Posterior cingulate gyrus (tissue), 11 donors: ENCODE measurements at regions of chr20 and their contacts with region 1.

Region 1: DNA sequence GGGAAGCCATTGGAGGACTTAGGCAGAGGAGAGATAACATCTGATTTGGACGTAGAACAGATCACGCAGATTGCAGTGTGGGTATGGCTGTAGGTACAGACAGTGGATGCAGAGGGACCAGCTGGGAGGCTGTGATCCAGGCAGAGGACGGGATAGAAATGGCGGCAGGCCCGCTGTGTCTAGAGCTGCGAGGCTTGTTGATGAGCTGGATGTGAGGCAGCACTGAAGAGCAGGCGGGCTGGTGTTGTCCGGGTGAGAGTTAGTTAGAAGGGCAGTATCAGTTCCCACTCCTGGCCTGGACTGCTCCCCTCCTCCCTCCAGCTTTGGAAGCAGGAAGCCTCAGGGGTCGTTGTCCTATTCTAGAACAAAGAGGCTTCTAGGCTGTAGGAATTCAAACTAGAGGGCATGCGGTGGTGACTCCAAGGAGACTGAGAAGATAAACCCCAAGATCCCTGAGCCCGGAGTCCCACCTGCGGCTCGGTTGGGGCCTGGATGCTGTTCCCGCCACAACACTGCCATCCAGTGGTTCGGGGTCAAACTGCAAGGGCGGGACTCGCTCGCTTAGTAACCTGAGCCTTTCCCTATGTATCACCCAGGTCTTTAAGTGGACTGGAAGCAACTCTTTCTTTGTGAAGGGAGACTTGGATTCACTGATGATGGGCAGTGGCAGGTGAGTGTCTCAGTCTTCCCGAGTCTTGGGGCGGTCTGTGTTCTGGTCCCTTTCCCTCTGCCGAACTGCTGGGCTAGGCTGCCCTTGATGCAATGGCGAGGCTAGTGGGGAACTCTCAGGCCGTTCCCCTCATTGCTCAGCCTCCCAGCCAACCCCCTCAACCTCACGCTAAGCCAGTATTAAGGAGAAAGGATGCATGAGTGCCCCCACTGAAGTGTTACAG is 11.2 kb downstream of the TLDC2 start:
- DNase-seq: peak; percentile 72 to 97 (median 88)

Region 2: DNA sequence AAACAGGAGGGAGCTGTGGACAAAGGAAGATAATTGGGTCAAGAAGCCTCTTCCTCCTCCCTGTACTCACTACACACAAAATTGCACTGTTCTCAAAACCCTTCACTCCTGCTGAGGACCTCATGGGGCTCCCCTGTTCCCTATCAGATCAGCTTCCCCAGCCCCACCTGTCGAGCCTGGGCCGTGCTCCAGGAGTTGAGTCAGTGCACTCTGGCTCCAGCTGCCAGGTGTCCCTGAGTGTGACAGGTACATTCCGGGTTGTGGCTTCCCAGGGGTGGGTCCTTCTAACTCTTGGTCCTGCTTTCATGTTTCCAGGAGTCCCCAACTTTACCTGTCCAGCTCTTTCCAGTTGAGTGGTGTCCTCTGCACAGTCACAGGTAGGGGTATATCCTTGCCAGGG is 273.1 kb before region 1 on chr20:
- intact Hi-C with region 1: loop called (anchors 10 kb)
- DNase-seq: peak in 1 of 10 donors; percentile 52

Region 3: GRCh38 chr20:36717657-36718056 is 169.4 kb before region 1 on chr20:
- intact Hi-C with region 1: loop called (anchors 5 kb)
- DNase-seq: peak in 3 of 10 donors; percentile 16 to 31 (median 27)

Region 4: DNA sequence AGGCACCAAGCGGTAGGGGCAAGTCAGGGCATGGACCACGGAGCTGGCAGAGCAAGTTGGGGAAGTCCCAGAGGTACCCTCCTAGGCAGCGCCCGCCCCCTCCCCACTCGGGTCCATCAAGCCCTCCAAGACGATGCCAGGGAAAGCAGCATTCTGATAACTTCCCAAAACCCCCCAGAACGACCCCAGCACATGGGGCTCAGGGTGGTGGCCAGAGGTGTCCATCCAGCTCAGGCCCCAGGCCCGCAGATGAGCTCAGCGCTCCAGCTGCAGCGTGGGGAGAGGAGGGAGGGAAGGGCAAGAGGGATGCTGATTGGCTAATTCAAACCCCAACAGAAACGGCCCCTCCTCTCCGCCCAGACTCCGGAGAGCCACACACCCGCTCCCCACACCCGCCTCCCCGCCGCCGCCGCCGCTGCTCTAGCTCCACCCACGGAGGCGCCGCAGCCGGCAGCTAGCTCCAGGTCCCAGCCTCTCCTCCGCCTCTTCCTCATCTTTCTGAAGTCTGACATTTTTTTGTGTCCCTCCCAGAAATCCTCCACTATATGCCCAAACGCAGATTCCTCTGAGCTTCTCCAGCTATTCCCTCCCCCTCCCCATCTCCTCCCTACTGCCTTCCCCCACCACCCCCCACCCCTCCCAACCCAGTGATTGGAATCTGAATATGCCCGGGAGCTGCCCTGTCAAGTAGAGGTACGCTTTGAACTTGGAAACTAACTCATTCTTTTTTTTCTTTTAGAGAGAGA is 51.5 kb before region 1 on chr20:
- intact Hi-C with region 1: no loop called
- DNase-seq: peak; percentile 88 to 99 (median 93)

Region 5: GRCh38 chr20:37172836-37173235 is 285.7 kb after region 1 on chr20:
- intact Hi-C with region 1: no loop called
- DNase-seq: no peak